HCT116 (cell line): ENCODE measurements at regions of chr22 and their contacts with region 1.

Region 1: DNA sequence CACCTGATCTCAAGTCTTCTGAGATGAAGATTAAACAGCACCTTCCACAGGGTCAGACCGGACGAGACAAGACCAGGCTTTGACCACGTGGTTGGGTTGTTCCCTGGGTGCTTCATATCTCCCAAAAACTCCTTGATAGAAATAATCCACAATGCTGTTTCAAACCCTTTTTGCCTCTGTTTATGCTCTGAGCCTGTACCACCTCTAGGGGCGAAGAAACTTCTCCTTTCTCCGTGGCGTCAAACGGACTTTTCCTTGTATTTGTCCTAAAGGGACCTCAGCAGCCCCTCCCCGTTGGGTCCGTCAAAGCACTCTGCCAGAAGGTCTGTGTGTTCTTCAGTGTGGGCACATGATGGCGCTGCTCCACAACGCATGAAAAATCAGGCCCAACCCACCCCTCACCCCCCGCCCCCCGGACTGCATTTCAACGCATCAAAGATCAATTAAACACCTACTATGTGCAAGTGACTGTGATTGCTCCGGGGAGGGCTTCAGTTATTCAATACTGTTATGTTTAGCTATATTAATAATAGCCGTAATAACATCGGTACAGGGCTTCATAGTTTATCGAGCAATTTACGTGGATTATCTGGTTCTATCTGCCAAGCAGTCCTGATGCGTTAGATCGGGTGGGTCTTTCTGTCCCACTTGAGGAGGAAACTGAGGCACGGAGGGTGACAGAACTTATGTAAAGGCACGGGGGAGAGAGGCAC is 17.3 kb upstream of the EIF3D start:
- DNase-seq: peak; percentile 73
- ATAC-seq: peak; percentile 83
- H3K4me3 ChIP-seq: peak overlapping the region in 1 of 2 experiments; percentile 15; a peak in 1 of 4 replicates
- H3K27ac ChIP-seq: no peak overlapping the region
- H3K4me1 ChIP-seq: peaks cover 14 to 51% of the 10 kb centered on the region in 2 experiments
- H3K27me3 ChIP-seq: peaks cover 5% of the 10 kb centered on the region; the same call in 1 of the 2 replicates
- CTCF ChIP-seq: peak; percentile 55 to 67 (median 57); a peak in 4 of 6 replicates
- POLR2A ChIP-seq: no peak
- RAD21 ChIP-seq: peak; percentile 80

Region 2: GRCh38 chr22:36528795-36529751 is 17.2 kb before region 1 on chr22 and contains the start of gene EIF3D:
- CTCF ChIA-PET with region 1: interaction called, 3 read pairs
- POLR2A ChIA-PET with region 1: interaction called, 27 read pairs
- RAD21 ChIA-PET with region 1: no interaction called
- intact Hi-C with region 1: no loop called
- DNase-seq: peak; percentile 99
- ATAC-seq: peak; percentile 92
- H3K4me3 ChIP-seq: peak within 1 kb of the TSS; percentile 97 to 99
- H3K27ac ChIP-seq: peak within 1 kb of the TSS; percentile 87
- H3K4me1 ChIP-seq: peaks cover 13 to 32% of the 10 kb centered on the region in 2 experiments; a peak in 3 of 4 replicates
- H3K27me3 ChIP-seq: no peaks in the 10 kb centered on the region
- CTCF ChIP-seq: no peak
- POLR2A ChIP-seq: peak; percentile 58
- RAD21 ChIP-seq: no peak
- total RNA-seq, gene EIF3D: 306 TPM

Region 3: DNA sequence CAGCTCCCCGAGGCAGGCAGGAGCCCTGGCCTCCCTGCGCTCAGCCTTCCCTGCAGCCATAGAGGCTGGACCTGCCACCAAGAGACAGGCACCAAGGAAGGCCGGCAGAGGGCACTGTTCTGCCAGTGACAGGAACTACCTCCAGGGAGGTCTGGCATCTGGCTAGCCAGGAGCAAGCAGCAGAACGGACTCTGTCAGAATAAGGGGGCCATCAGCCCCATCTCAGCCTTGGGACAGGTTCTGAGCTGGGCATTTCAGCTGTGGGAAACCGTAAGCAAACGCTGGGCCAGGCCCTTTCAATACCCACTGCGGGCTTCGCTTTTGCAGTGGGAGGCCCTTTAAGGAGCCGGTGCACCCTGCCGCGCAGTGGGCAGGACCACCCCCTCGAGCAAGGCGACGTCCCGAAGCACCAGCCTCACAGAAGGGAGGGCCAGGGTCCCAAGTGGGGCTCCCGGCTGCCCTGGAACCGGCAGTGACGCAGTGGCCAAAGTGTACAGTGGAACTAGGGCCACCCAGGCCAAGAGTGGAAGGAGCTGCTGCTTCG is 211.5 kb after region 1 on chr22:
- CTCF ChIA-PET with region 1: interaction called, 6 read pairs
- POLR2A ChIA-PET with region 1: no interaction called
- RAD21 ChIA-PET with region 1: no interaction called
- intact Hi-C with region 1: loop called (anchors 1 kb)
- DNase-seq: peak; percentile 57
- ATAC-seq: peak; percentile 96
- H3K4me3 ChIP-seq: no peak overlapping the region
- H3K27ac ChIP-seq: no peak overlapping the region
- H3K4me1 ChIP-seq: peaks cover 0 to 9% of the 10 kb centered on the region in 2 experiments; a peak in 3 of 4 replicates
- H3K27me3 ChIP-seq: peaks cover 5% of the 10 kb centered on the region; the same call in 1 of the 2 replicates
- CTCF ChIP-seq: peak; percentile 69 to 91 (median 89); a peak in 5 of 6 replicates
- POLR2A ChIP-seq: no peak
- RAD21 ChIP-seq: peak; percentile 76

Region 4: DNA sequence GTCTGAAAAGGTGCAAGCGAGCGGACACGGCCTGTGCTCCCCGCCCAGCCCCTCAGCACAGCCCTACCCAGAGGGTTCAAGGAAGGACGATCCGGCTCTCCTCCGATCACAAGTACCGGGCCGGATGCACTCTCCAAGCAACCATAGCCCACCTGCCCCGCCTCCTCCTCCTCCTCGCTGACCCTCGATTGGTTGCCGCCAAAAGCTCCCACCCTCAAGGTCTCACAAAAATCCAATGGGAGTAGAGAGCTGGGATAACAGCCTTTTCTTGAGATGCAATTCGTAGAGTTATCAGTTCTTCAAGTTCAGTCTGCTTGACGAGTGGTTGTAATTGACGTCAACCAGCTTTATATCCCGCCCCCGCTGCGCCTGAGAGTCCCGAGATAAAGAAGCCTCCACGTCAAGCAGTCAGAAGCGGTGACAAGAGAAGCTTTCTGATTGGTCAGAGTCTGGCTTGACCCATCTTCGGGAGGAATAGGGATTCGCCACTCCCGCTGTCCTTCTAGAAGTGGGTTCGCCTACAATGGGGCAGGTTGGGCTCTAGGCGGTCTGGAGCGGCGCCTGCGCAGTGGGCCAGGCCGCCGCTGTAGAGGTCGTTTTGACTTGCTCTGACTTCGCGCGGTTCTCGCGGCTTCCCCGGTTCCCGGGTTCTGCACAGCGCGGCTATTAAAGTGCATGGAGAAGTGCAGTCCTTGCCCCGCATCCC is 229.9 kb after region 1 on chr22 and contains the start of gene IFT27:
- CTCF ChIA-PET with region 1: interaction called, 18 read pairs
- POLR2A ChIA-PET with region 1: interaction called, 5 read pairs
- RAD21 ChIA-PET with region 1: interaction called, 4 to 8 read pairs
- intact Hi-C with region 1: loop called (anchors 2 kb)
- DNase-seq: peak; percentile 100
- ATAC-seq: peak; percentile 95
- H3K4me3 ChIP-seq: peak within 1 kb of the TSS; percentile 89 to 96
- H3K27ac ChIP-seq: peak within 1 kb of the TSS; percentile 24; the same call in 1 of the 2 replicates
- H3K4me1 ChIP-seq: peaks cover 5 to 20% of the 10 kb centered on the region in 2 experiments
- H3K27me3 ChIP-seq: no peaks in the 10 kb centered on the region
- CTCF ChIP-seq: no peak
- POLR2A ChIP-seq: peak; percentile 63
- RAD21 ChIP-seq: no peak
- total RNA-seq, gene IFT27: 23.2 TPM

Region 5: DNA sequence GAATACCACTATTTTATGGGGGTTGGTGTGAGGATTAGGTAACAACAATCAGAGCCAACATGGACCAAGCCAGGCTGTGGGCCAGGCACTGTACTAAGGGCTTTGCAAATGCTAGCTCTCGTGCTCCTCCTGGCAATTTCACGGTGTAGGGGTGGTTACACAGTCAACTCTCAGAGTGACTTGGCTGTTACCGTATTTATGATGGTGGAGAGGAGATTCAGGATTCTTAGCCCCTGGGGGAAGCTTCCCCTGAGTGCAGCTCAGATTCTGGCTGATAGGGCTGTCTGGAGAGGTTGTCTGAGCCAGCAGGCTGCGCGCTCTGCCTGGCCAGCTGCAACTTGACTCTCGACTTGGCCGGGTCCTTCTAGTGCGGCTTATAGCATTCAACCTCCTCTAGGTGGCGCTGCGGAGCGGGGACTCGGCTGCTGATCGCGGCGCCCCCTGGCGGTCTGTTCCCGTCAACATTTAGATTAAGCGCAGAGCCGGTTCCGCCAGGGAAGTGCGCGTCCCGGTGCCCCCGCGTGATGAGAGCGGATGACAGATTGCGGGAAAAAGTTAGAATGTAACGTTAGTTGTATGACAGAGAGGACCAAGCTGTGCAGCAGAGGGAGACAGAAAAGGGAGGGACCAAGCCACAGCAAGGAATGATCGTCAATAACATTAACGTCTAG is 310.0 kb after region 1 on chr22:
- CTCF ChIA-PET with region 1: interaction called, 8 read pairs
- POLR2A ChIA-PET with region 1: no interaction called
- RAD21 ChIA-PET with region 1: no interaction called
- intact Hi-C with region 1: loop called (anchors 1 kb)
- DNase-seq: peak; percentile 73
- ATAC-seq: peak; percentile 92
- H3K4me3 ChIP-seq: peak overlapping the region in 1 of 2 experiments; percentile 8; a peak in 1 of 4 replicates
- H3K27ac ChIP-seq: no peak overlapping the region
- H3K4me1 ChIP-seq: peaks cover 0 to 19% of the 10 kb centered on the region in 2 experiments; a peak in 1 of 4 replicates
- H3K27me3 ChIP-seq: no peaks in the 10 kb centered on the region
- CTCF ChIP-seq: peak; percentile 100
- POLR2A ChIP-seq: no peak
- RAD21 ChIP-seq: peak; percentile 82

Region 6: DNA sequence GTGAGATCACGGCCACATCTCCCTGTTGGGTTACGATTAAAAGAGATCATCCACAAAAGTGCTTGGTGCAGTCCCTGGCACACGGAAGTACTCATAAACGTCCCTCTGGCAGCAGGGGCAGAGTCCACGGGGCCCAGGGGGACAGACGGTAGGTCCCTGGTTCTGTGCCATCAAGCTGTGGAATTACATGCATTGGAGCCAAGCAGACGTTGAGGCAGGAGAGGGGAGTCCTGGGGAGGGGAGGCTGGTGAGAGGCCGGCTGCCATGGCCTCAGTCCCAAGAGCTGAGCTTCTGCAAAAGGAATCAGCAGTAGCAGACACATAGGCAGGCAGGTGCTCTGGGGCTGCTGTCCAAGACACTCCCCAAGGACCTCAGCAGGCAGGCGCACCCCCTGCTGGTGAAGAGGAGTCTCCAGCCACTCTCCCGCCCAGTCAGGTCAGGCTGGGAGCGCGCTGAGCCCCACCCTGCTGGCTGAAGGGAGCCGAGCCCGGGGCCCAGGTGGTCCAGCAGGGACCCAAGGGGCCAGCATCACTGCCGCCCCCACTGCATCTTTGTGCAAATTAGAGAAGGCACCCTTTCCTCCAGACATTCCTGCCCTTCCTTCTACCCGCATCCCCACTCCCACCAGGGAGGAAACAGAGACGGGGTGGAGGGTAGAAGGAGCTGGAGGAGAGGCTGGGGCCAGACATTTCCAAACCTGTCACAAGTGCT is 497.7 kb after region 1 on chr22:
- CTCF ChIA-PET with region 1: interaction called, 5 read pairs
- POLR2A ChIA-PET with region 1: no interaction called
- RAD21 ChIA-PET with region 1: no interaction called
- intact Hi-C with region 1: loop called (anchors 2 kb)
- DNase-seq: peak; percentile 47
- ATAC-seq: peak; percentile 100
- H3K4me3 ChIP-seq: no peak overlapping the region
- H3K27ac ChIP-seq: no peak overlapping the region
- H3K4me1 ChIP-seq: peaks cover 6 to 35% of the 10 kb centered on the region in 2 experiments; a peak in 3 of 4 replicates
- H3K27me3 ChIP-seq: no peaks in the 10 kb centered on the region
- CTCF ChIP-seq: peak; percentile 76 to 88 (median 79); a peak in 5 of 6 replicates
- POLR2A ChIP-seq: no peak
- RAD21 ChIP-seq: peak; percentile 82